Lower leg skin (tissue), 4 donors: ENCODE measurements at regions of chr17 and their contacts with region 1.

Region 1: DNA sequence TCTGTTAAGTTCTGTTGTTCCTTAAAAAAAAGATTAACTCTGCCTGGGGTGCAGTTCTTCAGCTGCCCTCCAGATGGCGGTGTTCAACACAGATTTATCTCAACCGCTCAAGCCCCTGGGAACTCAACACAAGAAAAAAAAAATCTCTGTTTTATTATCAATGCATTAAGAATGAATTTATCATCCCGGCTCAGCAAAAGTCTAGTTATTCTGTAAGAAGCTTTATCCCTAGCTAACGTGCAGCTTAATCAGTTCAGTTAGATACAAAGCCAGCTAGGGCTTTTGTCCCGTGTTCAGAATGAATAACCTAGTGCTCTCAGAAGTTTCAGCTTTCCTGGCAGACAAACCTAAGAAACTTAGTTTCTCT is 475.9 kb upstream of the CCL2 start:
- DNase-seq: peak in 1 of 2 donors; percentile 19
- H3K4me3 ChIP-seq: no peak overlapping the region
- CTCF ChIP-seq: no peak
- POLR2A ChIP-seq: no peak

Region 2: GRCh38 chr17:34156741-34157589 is 377.8 kb after region 1 on chr17:
- intact Hi-C with region 1: loop called (anchors 10 kb)
- DNase-seq: no peak
- H3K4me3 ChIP-seq: no peak overlapping the region
- CTCF ChIP-seq: no peak
- POLR2A ChIP-seq: no peak